Vagina (tissue), 2 donors: ENCODE measurements at regions of chr18 and their contacts with region 1.

Region 1: DNA sequence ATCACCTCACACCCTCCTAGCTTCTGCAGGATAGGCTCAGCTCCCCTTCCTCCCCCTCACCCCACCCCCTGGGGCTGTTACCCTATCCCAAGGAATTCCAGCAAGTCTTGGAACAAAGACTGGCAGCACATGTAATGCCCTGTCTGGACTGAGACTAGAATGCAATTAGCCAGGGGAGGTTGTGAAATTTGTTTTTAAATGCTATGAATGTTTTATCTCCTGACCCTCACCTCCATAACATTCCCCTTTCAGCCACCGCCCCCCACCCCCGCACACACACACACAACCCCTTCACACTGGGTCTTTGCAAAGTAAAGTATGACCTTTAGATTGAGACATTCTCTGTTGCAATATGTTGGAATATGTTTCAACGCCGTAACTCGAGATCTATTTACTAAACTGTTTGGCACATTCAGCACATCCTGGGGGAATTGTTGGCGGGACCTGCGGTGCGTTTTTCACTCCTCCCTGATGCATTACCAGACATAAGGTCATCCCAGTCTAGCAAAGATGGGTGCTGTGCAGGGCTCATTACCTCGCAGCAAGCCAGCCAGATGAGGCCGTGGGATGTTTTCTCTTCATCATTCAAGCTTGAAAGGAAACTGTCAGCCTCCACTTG is 290.7 kb upstream of the SLC14A2 start:
- DNase-seq: peak in 1 of 2 donors; percentile 97
- H3K4me3 ChIP-seq: no peak overlapping the region
- H3K27ac ChIP-seq: peak overlapping the region; percentile 28
- H3K4me1 ChIP-seq: peaks cover 33% of the 10 kb centered on the region
- H3K27me3 ChIP-seq: no peaks in the 10 kb centered on the region
- CTCF ChIP-seq: no peak
- POLR2A ChIP-seq: no peak

Region 2: GRCh38 chr18:44679056-44679905 is 645.3 kb before region 1 on chr18:
- intact Hi-C with region 1: loop called (anchors 2 kb)
- DNase-seq: no peak
- H3K4me3 ChIP-seq: peak overlapping the region; percentile 67 to 94
- H3K27ac ChIP-seq: peak overlapping the region; percentile 96
- H3K4me1 ChIP-seq: peaks cover 39% of the 10 kb centered on the region
- H3K27me3 ChIP-seq: no peaks in the 10 kb centered on the region
- CTCF ChIP-seq: peak; percentile 11 to 72 (median 58)
- POLR2A ChIP-seq: peak in 1 of 2 donors; percentile 87

Region 3: DNA sequence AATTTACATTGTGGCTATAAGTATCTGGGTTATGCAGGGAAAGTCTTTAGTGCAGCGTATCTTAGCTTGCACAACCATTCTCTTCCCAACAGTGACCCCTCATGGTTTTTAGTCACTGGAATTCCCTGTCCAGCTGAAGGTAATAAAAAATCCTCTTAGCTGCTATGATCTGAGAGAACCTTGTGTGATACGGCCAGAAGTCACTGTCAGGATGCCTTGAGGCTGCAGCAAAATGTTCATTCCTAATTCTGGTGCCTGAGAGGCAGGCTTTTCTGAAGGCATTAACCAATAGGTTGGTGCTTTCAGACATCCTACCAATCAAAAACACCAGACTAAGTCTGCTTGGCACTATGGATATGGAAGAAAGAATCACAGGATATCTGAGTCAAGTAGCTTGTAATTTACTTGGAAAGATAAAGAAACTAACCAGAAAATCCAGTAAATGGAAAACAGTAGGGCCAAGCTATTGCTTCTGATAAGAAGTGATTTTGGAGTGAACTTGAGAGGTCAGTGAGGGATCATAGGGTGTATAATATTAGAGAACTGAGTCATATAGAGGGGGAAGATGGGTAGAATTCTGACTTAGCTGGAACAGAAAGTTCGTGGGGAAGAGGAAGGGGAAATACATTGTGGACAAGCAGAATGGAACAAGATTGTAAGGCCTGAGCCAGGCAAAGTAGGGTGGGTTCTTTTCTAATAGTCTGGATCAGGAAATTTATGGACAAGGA is 201.7 kb after region 1 on chr18:
- intact Hi-C with region 1: loop called (anchors 10 kb)
- DNase-seq: no peak
- H3K4me3 ChIP-seq: no peak overlapping the region
- H3K27ac ChIP-seq: peak overlapping the region; percentile 0
- H3K4me1 ChIP-seq: peaks cover 12% of the 10 kb centered on the region
- H3K27me3 ChIP-seq: no peaks in the 10 kb centered on the region
- CTCF ChIP-seq: no peak
- POLR2A ChIP-seq: no peak

Region 4: DNA sequence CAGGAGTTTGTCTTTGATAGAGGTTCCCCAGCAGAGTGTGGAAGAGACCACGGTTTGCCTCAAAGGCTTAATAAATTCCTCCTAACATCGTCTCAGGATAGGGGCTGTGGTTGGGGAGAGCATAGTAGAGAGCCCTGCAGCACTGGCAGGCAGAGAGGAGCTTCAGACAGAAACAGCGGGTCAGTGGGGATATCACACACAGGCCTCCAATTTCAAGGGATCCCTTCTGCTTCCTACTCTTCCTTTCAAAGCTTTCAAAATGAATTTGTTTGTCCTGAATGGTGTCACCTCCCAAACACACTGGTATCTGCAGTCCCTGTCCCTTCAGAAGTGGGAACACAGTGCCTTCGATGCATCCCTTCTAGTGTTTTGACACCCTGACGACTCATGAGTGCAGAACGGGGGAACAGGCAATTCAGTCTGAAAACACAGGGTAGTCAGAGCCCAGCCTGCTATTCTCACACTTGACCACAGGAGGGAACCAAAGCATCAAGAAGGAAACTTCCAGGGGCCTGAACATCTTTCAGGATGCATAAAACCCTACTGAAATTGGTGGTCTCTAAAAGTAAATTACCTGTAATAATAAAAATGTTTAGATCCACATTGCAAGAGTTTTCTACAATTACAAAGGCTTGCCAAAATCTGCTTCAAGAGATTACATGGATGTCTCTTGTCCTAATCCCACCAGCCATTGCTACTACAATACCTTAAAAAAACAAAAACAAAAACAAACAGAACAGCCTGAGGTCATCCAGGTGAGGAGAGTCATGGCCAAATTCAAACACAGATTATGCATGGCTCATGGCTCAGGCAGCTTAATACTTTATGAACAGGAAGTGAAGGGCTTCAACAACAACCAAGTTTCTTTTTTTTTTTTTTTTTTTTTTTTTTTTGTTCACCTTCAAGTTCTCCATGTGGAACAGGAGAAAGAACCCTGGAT is 340.5 kb after region 1 on chr18:
- intact Hi-C with region 1: no loop called
- DNase-seq: no peak
- H3K4me3 ChIP-seq: no peak overlapping the region
- H3K27ac ChIP-seq: no peak overlapping the region
- H3K4me1 ChIP-seq: no peaks in the 10 kb centered on the region
- H3K27me3 ChIP-seq: no peaks in the 10 kb centered on the region
- CTCF ChIP-seq: peak; percentile 78 to 95 (median 90)
- POLR2A ChIP-seq: no peak